Colonic mucosa (tissue), 4 donors: ENCODE measurements at regions of chr19 and their contacts with region 1.

Region 1: DNA sequence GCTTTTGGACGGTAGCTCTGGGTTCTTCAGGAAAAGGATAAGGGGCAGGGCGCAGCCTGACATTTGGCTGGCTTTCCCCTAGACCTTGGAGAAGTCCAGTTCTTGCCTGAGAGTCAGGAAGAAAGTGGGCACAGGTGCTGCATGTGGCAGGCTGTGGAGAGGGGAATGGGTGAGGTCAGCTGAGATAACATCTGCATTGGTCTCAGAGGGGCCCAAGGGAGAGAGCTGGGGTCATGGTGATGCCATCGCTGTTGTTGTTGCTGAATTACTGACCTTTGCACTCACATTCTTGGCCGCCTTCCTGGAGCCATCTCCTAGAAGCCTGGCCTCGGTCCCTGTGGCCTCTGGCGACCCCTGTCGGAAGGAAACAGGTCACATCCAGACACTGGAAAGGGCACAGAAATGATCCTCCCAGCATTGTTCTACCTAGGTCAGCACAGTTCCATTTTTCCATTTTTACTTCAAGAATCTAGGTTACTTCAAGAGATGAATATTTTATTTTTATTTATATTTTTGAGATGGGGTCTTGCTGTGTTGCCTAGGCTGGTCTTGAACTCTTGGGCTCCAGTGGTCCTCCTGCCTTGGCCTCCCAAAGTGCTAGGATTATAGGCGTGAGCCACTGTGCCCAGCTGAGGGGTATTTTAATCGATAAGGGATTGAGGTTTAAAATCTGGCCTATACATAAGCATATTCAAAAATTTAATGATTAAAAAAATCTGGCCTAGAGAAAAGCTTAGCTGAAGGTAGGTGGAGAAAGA is 6.5 kb upstream of the LIPE start:
- DNase-seq: peak; percentile 97
- H3K4me3 ChIP-seq: no peak overlapping the region
- H3K27ac ChIP-seq: no peak overlapping the region
- H3K4me1 ChIP-seq: peaks cover 5% of the 10 kb centered on the region
- H3K27me3 ChIP-seq: no peaks in the 10 kb centered on the region
- CTCF ChIP-seq: peak; percentile 67

Region 2: DNA sequence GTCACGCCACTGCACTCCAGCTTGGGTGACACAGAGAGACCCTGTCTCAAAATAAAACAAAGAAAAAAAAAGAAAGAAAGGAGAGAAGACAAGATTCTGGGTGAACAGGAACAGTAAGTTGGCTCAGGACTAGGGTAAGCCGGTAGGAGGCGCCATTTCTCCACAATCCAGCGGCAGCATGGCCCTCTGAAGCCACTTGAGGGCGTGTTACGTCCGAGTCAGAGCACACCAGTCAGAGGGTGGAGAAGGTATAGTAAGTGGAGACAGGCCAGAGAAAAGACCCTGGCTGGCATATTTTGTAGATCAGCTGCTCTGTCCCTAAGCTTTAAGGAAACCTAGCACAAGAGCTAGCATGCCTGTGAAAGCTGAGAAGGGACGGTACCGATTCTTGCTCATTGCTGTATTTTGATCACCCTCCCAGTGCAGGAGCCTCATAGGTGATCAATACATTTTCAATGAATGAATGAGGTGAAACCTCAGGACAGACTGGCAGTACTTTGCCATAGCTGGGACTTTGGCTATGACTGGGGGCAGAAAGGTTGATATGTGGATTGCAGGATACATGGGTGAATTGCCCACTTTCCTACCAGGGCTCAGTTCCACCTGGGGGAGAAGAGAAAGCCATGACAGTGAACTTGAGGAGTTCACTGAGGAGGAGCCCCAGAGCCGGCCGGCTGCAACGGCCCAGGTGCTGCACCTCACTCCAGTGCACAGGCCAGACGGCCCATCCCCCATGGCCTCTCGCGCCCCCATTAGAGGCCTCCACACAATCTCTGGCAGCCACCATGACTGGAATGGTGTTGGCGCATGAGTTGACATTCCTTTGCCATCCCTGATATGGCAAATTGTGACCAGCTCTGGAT is 324.9 kb before region 1 on chr19:
- intact Hi-C with region 1: loop called (anchors 2 kb)
- DNase-seq: peak; percentile 85
- H3K4me3 ChIP-seq: no peak overlapping the region
- H3K27ac ChIP-seq: no peak overlapping the region
- H3K4me1 ChIP-seq: peaks cover 3% of the 10 kb centered on the region
- H3K27me3 ChIP-seq: no peaks in the 10 kb centered on the region
- CTCF ChIP-seq: peak; percentile 95

Region 3: DNA sequence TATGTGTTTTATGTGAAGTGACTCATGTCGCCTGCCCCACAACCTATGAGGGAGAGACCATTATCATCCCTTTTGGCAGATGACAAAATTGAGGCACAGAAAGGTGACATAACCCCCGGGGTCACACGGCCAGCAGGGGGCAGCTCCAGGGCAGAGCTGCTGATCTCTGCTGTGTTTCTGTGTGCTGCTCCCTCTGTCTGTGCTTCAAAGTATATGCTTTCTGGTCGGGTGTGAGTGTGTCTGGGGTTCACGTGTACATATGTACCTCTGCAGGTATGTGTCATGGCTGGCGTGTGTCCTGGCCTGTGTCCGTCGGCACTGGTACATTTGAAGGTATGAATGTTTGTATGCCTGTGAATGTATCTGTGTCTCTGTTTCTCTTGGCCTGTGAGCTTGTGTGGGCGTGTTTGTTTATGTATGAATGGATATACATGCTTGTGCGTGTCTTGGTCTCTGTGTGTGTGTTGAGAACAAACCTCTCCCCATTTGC is 13.6 kb before region 1 on chr19:
- intact Hi-C with region 1: loop called (anchors 1 kb)
- DNase-seq: peak; percentile 69
- H3K4me3 ChIP-seq: no peak overlapping the region
- H3K27ac ChIP-seq: no peak overlapping the region
- H3K4me1 ChIP-seq: peaks cover 12% of the 10 kb centered on the region
- H3K27me3 ChIP-seq: no peaks in the 10 kb centered on the region
- CTCF ChIP-seq: peak; percentile 49